MCF 10A (cell line): ENCODE measurements at regions of chr1 and their contacts with region 1.

Region 1: GRCh38 chr1:162381383-162381782 is at the start of gene C1orf226:
- DNase-seq: peak; percentile 95
- H3K4me3 Mint-ChIP-seq: peak within 1 kb of the TSS; percentile 26
- H3K27ac Mint-ChIP-seq: peak within 1 kb of the TSS; percentile 89
- H3K4me1 Mint-ChIP-seq: peaks cover 50% of the 10 kb centered on the region
- H3K27me3 Mint-ChIP-seq: no peaks in the 10 kb centered on the region
- CTCF ChIP-seq: no peak
- total RNA-seq, gene C1orf226: 3.1 and 3.3 TPM in 2 replicates

Region 2: GRCh38 chr1:162069328-162070093 is 311.9 kb before region 1 on chr1 and contains the start of gene NOS1AP:
- CTCF ChIA-PET with region 1: no interaction called
- POLR2A ChIA-PET with region 1: interaction called, 13 read pairs
- intact Hi-C with region 1: no loop called
- DNase-seq: peak; percentile 82
- H3K4me3 Mint-ChIP-seq: peak within 1 kb of the TSS; percentile 84
- H3K27ac Mint-ChIP-seq: no peak within 1 kb of the TSS
- H3K4me1 Mint-ChIP-seq: peaks cover 12% of the 10 kb centered on the region
- H3K27me3 Mint-ChIP-seq: no peaks in the 10 kb centered on the region
- CTCF ChIP-seq: no peak
- total RNA-seq, gene NOS1AP: 1.1 and 2.4 TPM in 2 replicates

Region 3: GRCh38 chr1:162349635-162350330 is 31.6 kb before region 1 on chr1:
- CTCF ChIA-PET with region 1: interaction called, 7 read pairs
- POLR2A ChIA-PET with region 1: interaction called, 17 read pairs
- intact Hi-C with region 1: no loop called
- DNase-seq: peak; percentile 81
- H3K4me3 Mint-ChIP-seq: peak overlapping the region; percentile 26
- H3K27ac Mint-ChIP-seq: peak overlapping the region; percentile 95
- H3K4me1 Mint-ChIP-seq: peaks cover 29% of the 10 kb centered on the region
- H3K27me3 Mint-ChIP-seq: no peaks in the 10 kb centered on the region
- CTCF ChIP-seq: no peak

Region 4: DNA sequence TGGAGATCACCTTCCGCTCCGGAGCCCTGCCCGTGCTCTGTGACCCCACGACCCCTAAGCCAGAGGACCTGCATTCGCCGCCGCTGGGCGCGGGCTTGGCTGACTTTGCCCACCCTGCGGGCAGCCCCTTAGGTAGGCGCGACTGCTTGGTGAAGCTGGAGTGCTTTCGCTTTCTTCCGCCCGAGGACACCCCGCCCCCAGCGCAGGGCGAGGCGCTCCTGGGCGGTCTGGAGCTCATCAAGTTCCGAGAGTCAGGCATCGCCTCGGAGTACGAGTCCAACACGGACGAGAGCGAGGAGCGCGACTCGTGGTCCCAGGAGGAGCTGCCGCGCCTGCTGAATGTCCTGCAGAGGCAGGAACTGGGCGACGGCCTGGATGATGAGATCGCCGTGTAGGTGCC is 14.3 kb before region 1 on chr1:
- CTCF ChIA-PET with region 1: interaction called, 21 read pairs
- POLR2A ChIA-PET with region 1: interaction called, 77 read pairs
- intact Hi-C with region 1: no loop called
- DNase-seq: no peak
- H3K4me3 Mint-ChIP-seq: no peak overlapping the region
- H3K27ac Mint-ChIP-seq: no peak overlapping the region
- H3K4me1 Mint-ChIP-seq: peaks cover 27% of the 10 kb centered on the region
- H3K27me3 Mint-ChIP-seq: no peaks in the 10 kb centered on the region
- CTCF ChIP-seq: no peak